ENCODE measurements at regions of chr1 and their contacts with region 1.

Region 1: GRCh38 chr1:9573723-9574122 is 15.0 kb upstream of the TMEM201 start:
- DNase-seq: peak in 3 of 5 donors; percentile 13 to 22 (median 20)
- H3K4me3 ChIP-seq: no peak overlapping the region
- H3K4me3 Mint-ChIP-seq: no peak overlapping the region
- H3K27ac ChIP-seq: no peak overlapping the region
- H3K27ac Mint-ChIP-seq: peak overlapping the region in 1 of 7 donors; percentile 13
- H3K4me1 ChIP-seq: no peaks in the 10 kb centered on the region
- H3K4me1 Mint-ChIP-seq: peaks cover 0 to 1% (median 0%) of the 10 kb centered on the region in 4 donors
- H3K27me3 ChIP-seq: no peaks in the 10 kb centered on the region
- H3K27me3 Mint-ChIP-seq: no peaks in the 10 kb centered on the region

Region 2: DNA sequence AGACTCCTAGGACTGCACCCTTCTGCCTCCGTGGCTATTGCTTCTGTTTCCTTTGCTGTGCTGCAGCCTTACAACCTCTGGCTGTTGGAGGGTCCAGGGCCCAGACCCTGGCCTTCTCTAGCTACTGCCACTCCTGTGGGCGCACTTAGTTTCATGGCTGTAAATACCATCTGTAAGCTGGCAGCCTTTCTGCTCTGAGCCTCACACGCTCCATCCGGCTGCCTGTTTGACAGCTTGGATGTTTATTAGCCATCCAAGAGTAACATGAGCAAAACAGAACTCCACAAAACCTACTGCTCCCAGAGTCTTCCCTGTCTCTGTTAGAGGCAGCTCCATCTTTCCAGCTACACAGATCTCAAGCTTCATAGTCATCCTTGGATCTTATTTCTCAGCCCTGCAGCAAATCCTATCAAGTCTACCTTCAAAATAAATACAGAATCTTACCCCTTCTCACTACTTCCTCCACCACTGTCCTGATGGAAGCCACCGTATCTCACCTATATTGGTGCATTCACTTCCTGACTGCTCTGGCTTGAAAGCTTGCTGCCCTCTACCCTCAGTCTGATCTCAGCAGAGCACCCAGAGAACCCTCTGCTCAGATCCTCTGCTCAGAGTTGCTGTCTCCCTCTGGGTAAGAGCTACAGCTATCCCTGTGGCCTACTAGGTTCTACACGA is 15.3 kb before region 1 on chr1:
- CTCF ChIA-PET with region 1: interaction called, 10 read pairs
- POLR2A ChIA-PET with region 1: no interaction called
- intact Hi-C with region 1: no loop called
- DNase-seq: no peak
- H3K4me3 ChIP-seq: no peak overlapping the region
- H3K4me3 Mint-ChIP-seq: peak overlapping the region in 7 of 8 donors; percentile 3 to 62 (median 32)
- H3K27ac ChIP-seq: no peak overlapping the region
- H3K27ac Mint-ChIP-seq: peak overlapping the region in 6 of 7 donors; percentile 63 to 86 (median 78)
- H3K4me1 ChIP-seq: peaks cover 25% of the 10 kb centered on the region
- H3K4me1 Mint-ChIP-seq: peaks cover 21 to 36% (median 28%) of the 10 kb centered on the region in 4 donors
- H3K27me3 ChIP-seq: no peaks in the 10 kb centered on the region
- H3K27me3 Mint-ChIP-seq: no peaks in the 10 kb centered on the region

Region 3: DNA sequence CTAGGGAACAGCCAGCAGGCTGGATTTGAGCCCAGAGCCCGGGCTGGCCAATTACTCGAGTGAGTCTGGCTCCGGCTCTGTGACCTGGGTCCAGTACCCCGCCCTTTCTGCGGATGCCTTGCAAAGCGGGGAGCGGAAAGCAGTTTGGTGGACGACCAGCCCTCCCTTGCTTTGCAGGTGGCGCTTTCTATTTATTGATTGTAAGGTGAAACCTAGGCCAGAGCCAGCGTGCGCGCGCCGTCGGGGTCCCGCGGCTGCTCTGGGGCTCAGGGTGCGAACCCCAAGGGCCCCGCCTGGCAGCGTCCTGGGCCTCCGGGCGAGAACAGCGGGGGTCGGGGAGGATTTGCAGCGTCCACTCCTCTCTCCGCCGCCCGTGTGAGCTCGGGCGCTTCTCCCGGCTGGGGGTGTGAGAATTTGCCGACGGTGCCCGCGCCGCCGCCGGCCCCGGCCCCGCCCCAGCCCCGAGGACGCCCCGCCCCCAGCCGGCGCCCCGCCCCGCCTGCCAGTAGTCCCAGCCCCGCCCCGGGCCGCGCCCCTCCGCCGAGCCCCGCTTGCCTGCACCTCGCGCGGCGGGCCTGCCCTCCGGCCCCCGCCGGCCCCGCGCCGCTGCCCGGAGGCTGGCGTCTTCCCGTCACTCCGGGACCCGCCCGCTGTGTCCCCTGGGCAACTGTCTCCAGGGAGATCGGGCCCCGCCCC is 115.4 kb after region 1 on chr1:
- CTCF ChIA-PET with region 1: no interaction called
- POLR2A ChIA-PET with region 1: no interaction called
- intact Hi-C with region 1: no loop called
- DNase-seq: peak; percentile 75 to 80 (median 78)
- H3K4me3 ChIP-seq: peak overlapping the region; percentile 57 to 63
- H3K4me3 Mint-ChIP-seq: peak overlapping the region; percentile 61 to 89 (median 78)
- H3K27ac ChIP-seq: peak overlapping the region; percentile 37
- H3K27ac Mint-ChIP-seq: peak overlapping the region in 4 of 7 donors; percentile 46 to 85 (median 52)
- H3K4me1 ChIP-seq: peaks cover 77% of the 10 kb centered on the region
- H3K4me1 Mint-ChIP-seq: peaks cover 38 to 80% (median 60%) of the 10 kb centered on the region in 4 donors
- H3K27me3 ChIP-seq: no peaks in the 10 kb centered on the region
- H3K27me3 Mint-ChIP-seq: no peaks in the 10 kb centered on the region